Naive thymus-derived CD4-positive, alpha-beta T cell (primary cell): ENCODE measurements at regions of chr12 and their contacts with region 1.

Region 1: DNA sequence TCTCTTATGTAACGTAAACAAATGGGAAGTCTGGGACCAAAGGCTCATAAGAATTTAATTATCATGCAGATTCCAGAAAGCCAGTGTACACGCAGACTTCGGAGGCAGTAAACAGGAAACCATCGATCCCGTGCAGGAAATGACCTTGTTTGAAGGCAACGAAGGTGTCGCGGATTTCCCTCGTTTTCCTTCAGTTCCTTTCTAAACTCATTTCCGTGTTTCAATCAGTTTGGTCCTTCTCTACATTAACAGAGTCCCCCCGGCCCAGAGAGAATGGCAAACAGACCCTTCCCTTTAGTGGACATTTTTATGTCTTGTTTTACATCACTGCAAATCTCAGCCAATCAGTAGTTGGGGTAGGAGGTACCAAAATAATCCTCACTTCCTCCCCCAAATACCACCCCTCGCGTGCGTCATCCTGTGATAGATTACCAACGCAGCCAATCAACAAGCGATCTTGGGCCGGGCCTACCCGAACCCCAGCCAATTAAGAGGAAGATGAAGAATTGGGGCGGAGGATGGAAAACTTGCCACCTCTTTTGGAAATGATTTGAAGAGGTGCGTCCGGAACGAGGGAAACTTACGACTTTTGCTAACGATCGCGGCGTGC is 6.1 kb upstream of the FOXJ2 start:
- DNase-seq: peak; percentile 74 to 99 (median 98)
- ATAC-seq: peak; percentile 96
- H3K4me3 ChIP-seq: peak overlapping the region; percentile 79
- H3K4me3 Mint-ChIP-seq: peak overlapping the region; percentile 89 to 100 (median 96)
- H3K27ac ChIP-seq: peak overlapping the region; percentile 99
- H3K27ac Mint-ChIP-seq: peak overlapping the region; percentile 96 to 100 (median 99)
- H3K4me1 ChIP-seq: peaks cover 5 to 8% of the 10 kb centered on the region in 2 donors
- H3K4me1 Mint-ChIP-seq: peaks cover 5 to 36% (median 13%) of the 10 kb centered on the region in 7 donors
- H3K27me3 ChIP-seq: no peaks in the 10 kb centered on the region
- H3K27me3 Mint-ChIP-seq: peaks cover 0 to 2% (median 0%) of the 10 kb centered on the region in 5 donors

Region 2: GRCh38 chr12:7282844-7283243 is 743.6 kb before region 1 on chr12:
- CTCF ChIA-PET with region 1: no interaction called
- POLR2A ChIA-PET with region 1: no interaction called
- intact Hi-C with region 1: no loop called
- DNase-seq: no peak
- ATAC-seq: no peak
- H3K4me3 ChIP-seq: no peak overlapping the region
- H3K4me3 Mint-ChIP-seq: no peak overlapping the region
- H3K27ac ChIP-seq: no peak overlapping the region
- H3K27ac Mint-ChIP-seq: no peak overlapping the region
- H3K4me1 ChIP-seq: no peaks in the 10 kb centered on the region
- H3K4me1 Mint-ChIP-seq: no peaks in the 10 kb centered on the region
- H3K27me3 ChIP-seq: no peaks in the 10 kb centered on the region
- H3K27me3 Mint-ChIP-seq: peaks cover 13 to 59% (median 36%) of the 10 kb centered on the region in 5 donors

Region 3: DNA sequence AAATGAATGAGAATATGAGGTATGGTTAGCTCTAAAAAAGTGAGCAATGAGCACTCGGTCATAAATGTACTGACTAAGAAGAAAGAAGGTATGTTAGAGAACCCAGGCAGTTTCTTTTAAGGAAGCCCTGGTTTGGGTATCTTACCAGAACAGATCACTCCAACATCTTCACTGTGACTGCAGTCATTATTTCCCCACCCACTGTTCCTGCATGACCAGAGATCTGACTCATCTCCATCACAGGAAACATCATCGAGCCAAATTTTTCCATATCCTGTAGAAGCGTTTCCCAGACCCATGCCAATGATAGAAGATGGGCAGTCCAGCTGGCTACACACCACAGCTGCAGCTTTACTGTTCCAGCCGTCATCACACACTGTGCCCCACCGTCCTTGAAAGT is 630.4 kb before region 1 on chr12:
- CTCF ChIA-PET with region 1: no interaction called
- POLR2A ChIA-PET with region 1: no interaction called
- intact Hi-C with region 1: no loop called
- DNase-seq: no peak
- ATAC-seq: no peak
- H3K4me3 ChIP-seq: no peak overlapping the region
- H3K4me3 Mint-ChIP-seq: no peak overlapping the region
- H3K27ac ChIP-seq: no peak overlapping the region
- H3K27ac Mint-ChIP-seq: no peak overlapping the region
- H3K4me1 ChIP-seq: no peaks in the 10 kb centered on the region
- H3K4me1 Mint-ChIP-seq: no peaks in the 10 kb centered on the region
- H3K27me3 ChIP-seq: no peaks in the 10 kb centered on the region
- H3K27me3 Mint-ChIP-seq: peaks cover 6 to 19% (median 17%) of the 10 kb centered on the region in 5 donors

Region 4: GRCh38 chr12:7647071-7647470 is 379.3 kb before region 1 on chr12:
- CTCF ChIA-PET with region 1: no interaction called
- POLR2A ChIA-PET with region 1: no interaction called
- intact Hi-C with region 1: no loop called
- DNase-seq: no peak
- ATAC-seq: no peak
- H3K4me3 ChIP-seq: no peak overlapping the region
- H3K4me3 Mint-ChIP-seq: no peak overlapping the region
- H3K27ac ChIP-seq: no peak overlapping the region
- H3K27ac Mint-ChIP-seq: no peak overlapping the region
- H3K4me1 ChIP-seq: no peaks in the 10 kb centered on the region
- H3K4me1 Mint-ChIP-seq: peaks cover 0 to 12% (median 6%) of the 10 kb centered on the region in 7 donors
- H3K27me3 ChIP-seq: no peaks in the 10 kb centered on the region
- H3K27me3 Mint-ChIP-seq: peaks cover 0 to 6% (median 0%) of the 10 kb centered on the region in 5 donors

Region 5: GRCh38 chr12:7959701-7960121 is 66.7 kb before region 1 on chr12:
- CTCF ChIA-PET with region 1: no interaction called
- POLR2A ChIA-PET with region 1: interaction called, 15 read pairs
- intact Hi-C with region 1: loop called (anchors 1 kb)
- DNase-seq: peak in 8 of 9 donors; percentile 34 to 49 (median 40)
- ATAC-seq: peak; percentile 33
- H3K4me3 ChIP-seq: peak overlapping the region; percentile 79
- H3K4me3 Mint-ChIP-seq: peak overlapping the region; percentile 80 to 97 (median 89)
- H3K27ac ChIP-seq: peak overlapping the region; percentile 87
- H3K27ac Mint-ChIP-seq: peak overlapping the region; percentile 87 to 99 (median 95)
- H3K4me1 ChIP-seq: peaks cover 26 to 29% of the 10 kb centered on the region in 2 donors
- H3K4me1 Mint-ChIP-seq: peaks cover 27 to 51% (median 46%) of the 10 kb centered on the region in 7 donors
- H3K27me3 ChIP-seq: no peaks in the 10 kb centered on the region
- H3K27me3 Mint-ChIP-seq: no peaks in the 10 kb centered on the region

Region 6: GRCh38 chr12:7970475-7971252 is 55.7 kb before region 1 on chr12:
- CTCF ChIA-PET with region 1: no interaction called
- POLR2A ChIA-PET with region 1: interaction called, 10 read pairs
- intact Hi-C with region 1: loop called (anchors 1 kb)
- DNase-seq: peak; percentile 68 to 91 (median 85)
- ATAC-seq: peak; percentile 93
- H3K4me3 ChIP-seq: peak overlapping the region; percentile 75
- H3K4me3 Mint-ChIP-seq: peak overlapping the region; percentile 82 to 96 (median 90)
- H3K27ac ChIP-seq: peak overlapping the region; percentile 99
- H3K27ac Mint-ChIP-seq: peak overlapping the region; percentile 92 to 99 (median 98)
- H3K4me1 ChIP-seq: peaks cover 13 to 14% of the 10 kb centered on the region in 2 donors
- H3K4me1 Mint-ChIP-seq: peaks cover 17 to 37% (median 33%) of the 10 kb centered on the region in 7 donors
- H3K27me3 ChIP-seq: no peaks in the 10 kb centered on the region
- H3K27me3 Mint-ChIP-seq: no peaks in the 10 kb centered on the region

Region 7: GRCh38 chr12:7989827-7990551 is 36.4 kb before region 1 on chr12:
- CTCF ChIA-PET with region 1: no interaction called
- POLR2A ChIA-PET with region 1: interaction called, 4 read pairs
- intact Hi-C with region 1: loop called (anchors 1 kb)
- DNase-seq: peak; percentile 22 to 73 (median 27)
- ATAC-seq: peak; percentile 94
- H3K4me3 ChIP-seq: no peak overlapping the region
- H3K4me3 Mint-ChIP-seq: peak overlapping the region; percentile 61 to 85 (median 72)
- H3K27ac ChIP-seq: no peak overlapping the region
- H3K27ac Mint-ChIP-seq: peak overlapping the region; percentile 71 to 92 (median 87)
- H3K4me1 ChIP-seq: peaks cover 19 to 20% of the 10 kb centered on the region in 2 donors
- H3K4me1 Mint-ChIP-seq: peaks cover 18 to 53% (median 24%) of the 10 kb centered on the region in 7 donors
- H3K27me3 ChIP-seq: no peaks in the 10 kb centered on the region
- H3K27me3 Mint-ChIP-seq: no peaks in the 10 kb centered on the region

Region 8: DNA sequence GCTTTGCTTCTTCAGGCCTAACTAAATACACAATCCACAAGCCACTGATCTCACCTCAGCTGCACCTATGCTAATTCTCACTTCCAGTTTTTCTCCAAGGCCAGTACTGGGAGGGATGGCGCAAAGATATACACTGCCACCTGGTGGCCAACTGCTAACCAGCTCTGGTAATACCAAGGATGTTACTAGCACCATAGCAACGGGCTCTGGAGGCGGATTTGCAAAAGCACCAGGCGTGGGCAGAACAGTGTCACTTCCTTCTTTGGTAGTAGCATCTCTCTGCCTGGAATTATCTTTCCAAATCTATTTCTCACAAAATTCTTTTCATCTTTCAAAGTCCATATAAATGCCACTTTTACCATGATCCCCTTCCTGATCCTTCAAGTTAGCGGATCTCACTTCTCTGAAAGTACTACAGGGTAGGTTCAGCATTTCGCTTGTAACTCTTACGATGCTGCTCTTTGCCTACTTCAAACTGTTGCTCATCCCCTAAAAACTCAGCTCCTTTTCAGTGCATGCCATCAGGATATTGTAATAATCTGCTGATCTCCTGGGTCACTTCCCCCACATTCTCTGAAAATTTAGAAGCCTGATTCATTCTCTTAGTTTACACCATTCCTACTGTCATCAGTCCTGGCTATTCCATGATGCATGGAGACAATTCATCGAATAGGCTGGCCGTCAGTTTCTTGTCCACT is 31.0 kb before region 1 on chr12:
- CTCF ChIA-PET with region 1: no interaction called
- POLR2A ChIA-PET with region 1: interaction called, 4 read pairs
- intact Hi-C with region 1: loop called (anchors 1 kb)
- DNase-seq: peak; percentile 39 to 89 (median 84)
- ATAC-seq: peak; percentile 100
- H3K4me3 ChIP-seq: no peak overlapping the region
- H3K4me3 Mint-ChIP-seq: no peak overlapping the region
- H3K27ac ChIP-seq: peak overlapping the region; percentile 60
- H3K27ac Mint-ChIP-seq: no peak overlapping the region
- H3K4me1 ChIP-seq: peaks cover 11 to 14% of the 10 kb centered on the region in 2 donors
- H3K4me1 Mint-ChIP-seq: peaks cover 9 to 28% (median 11%) of the 10 kb centered on the region in 7 donors
- H3K27me3 ChIP-seq: no peaks in the 10 kb centered on the region
- H3K27me3 Mint-ChIP-seq: no peaks in the 10 kb centered on the region

Region 9: GRCh38 chr12:8038659-8039114 is 12.3 kb after region 1 on chr12:
- CTCF ChIA-PET with region 1: interaction called, 12 read pairs
- POLR2A ChIA-PET with region 1: interaction called, 50 read pairs
- intact Hi-C with region 1: loop called (anchors 1 kb)
- DNase-seq: peak in 2 of 9 donors; percentile 20 to 22
- ATAC-seq: peak; percentile 74
- H3K4me3 ChIP-seq: peak overlapping the region; percentile 42
- H3K4me3 Mint-ChIP-seq: peak overlapping the region; percentile 67 to 90 (median 76)
- H3K27ac ChIP-seq: peak overlapping the region; percentile 62
- H3K27ac Mint-ChIP-seq: peak overlapping the region; percentile 2 to 95 (median 60)
- H3K4me1 ChIP-seq: peaks cover 43 to 58% of the 10 kb centered on the region in 2 donors
- H3K4me1 Mint-ChIP-seq: peaks cover 56 to 68% (median 62%) of the 10 kb centered on the region in 7 donors
- H3K27me3 ChIP-seq: no peaks in the 10 kb centered on the region
- H3K27me3 Mint-ChIP-seq: no peaks in the 10 kb centered on the region